ENCODE measurements at regions of chr13 and their contacts with region 1.

Region 1: GRCh38 chr13:95403828-95404522 is 102.7 kb upstream of the ABCC4 start:
- DNase-seq: peak; percentile 48
- ATAC-seq: peak; percentile 95
- H3K4me3 ChIP-seq: peak overlapping the region; percentile 65
- H3K27ac ChIP-seq: peak overlapping the region; percentile 36; the same call in 1 of the 2 replicates
- H3K4me1 ChIP-seq: peaks cover 7% of the 10 kb centered on the region; the same call in 1 of the 2 replicates
- H3K27me3 ChIP-seq: no peaks in the 10 kb centered on the region
- CTCF ChIP-seq: peak; percentile 91 to 97 (median 93); a peak in 5 of 6 replicates
- EP300 ChIP-seq: no peak
- POLR2A ChIP-seq: no peak
- RAD21 ChIP-seq: peak; percentile 100

Region 2: DNA sequence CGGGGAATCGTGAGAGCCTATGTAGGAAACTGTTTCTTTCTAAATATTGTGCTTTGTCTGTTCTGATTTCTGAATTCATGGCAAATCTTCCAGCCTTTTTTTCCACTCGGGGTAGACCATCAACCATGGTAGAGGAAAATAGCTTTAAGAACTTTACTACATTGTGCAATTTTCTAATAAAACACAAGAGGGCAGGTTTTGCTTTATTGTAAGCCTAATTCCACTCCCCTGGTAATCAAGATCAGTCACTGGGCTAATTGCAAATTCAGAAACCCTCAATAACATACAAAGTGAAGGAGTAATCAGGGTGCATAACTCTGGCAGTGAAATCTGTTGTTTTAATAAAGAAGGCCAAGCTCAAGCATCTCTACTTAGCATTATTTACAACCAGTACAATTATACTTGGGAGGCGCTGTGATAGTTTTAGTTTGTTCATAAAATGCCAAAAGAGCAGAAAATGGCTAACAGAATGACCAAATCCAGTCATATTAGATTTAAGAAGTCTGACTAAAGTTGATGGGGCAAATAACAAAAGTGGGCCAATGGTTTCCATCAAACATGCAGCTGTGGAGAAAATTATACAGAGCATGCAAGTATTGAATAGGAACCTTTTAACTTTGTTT is 968.3 kb before region 1 on chr13:
- CTCF ChIA-PET with region 1: interaction called, 4 read pairs
- POLR2A ChIA-PET with region 1: no interaction called
- RAD21 ChIA-PET with region 1: interaction called, 4 read pairs
- SMC1A ChIA-PET with region 1: no interaction called
- in situ Hi-C with region 1: loop called (anchors 25 kb)
- intact Hi-C with region 1: no loop called
- DNase-seq: no peak
- ATAC-seq: peak; percentile 83
- H3K4me3 ChIP-seq: no peak overlapping the region
- H3K27ac ChIP-seq: no peak overlapping the region
- H3K4me1 ChIP-seq: no peaks in the 10 kb centered on the region
- H3K27me3 ChIP-seq: no peaks in the 10 kb centered on the region; a peak in 1 of 4 replicates
- CTCF ChIP-seq: peak; percentile 44 to 62 (median 49); a peak in 4 of 6 replicates
- EP300 ChIP-seq: no peak
- POLR2A ChIP-seq: no peak
- RAD21 ChIP-seq: peak; percentile 79

Region 3: GRCh38 chr13:94859278-94859691 is 544.7 kb before region 1 on chr13:
- CTCF ChIA-PET with region 1: no interaction called
- POLR2A ChIA-PET with region 1: no interaction called
- RAD21 ChIA-PET with region 1: no interaction called
- SMC1A ChIA-PET with region 1: no interaction called
- in situ Hi-C with region 1: no loop called
- intact Hi-C with region 1: no loop called
- DNase-seq: no peak
- ATAC-seq: no peak
- H3K4me3 ChIP-seq: no peak overlapping the region
- H3K27ac ChIP-seq: no peak overlapping the region
- H3K4me1 ChIP-seq: no peaks in the 10 kb centered on the region
- H3K27me3 ChIP-seq: 0 out of 4 replicates have a peak, but pooled peaks cover 0 to 1% of the 10 kb centered on the region in 2 experiments
- CTCF ChIP-seq: no peak
- EP300 ChIP-seq: no peak
- POLR2A ChIP-seq: no peak
- RAD21 ChIP-seq: no peak

Region 4: GRCh38 chr13:94928127-94928775 is 475.7 kb before region 1 on chr13:
- CTCF ChIA-PET with region 1: no interaction called
- POLR2A ChIA-PET with region 1: no interaction called
- RAD21 ChIA-PET with region 1: no interaction called
- SMC1A ChIA-PET with region 1: no interaction called
- in situ Hi-C with region 1: no loop called
- intact Hi-C with region 1: no loop called
- DNase-seq: no peak
- ATAC-seq: no peak
- H3K4me3 ChIP-seq: no peak overlapping the region
- H3K27ac ChIP-seq: no peak overlapping the region
- H3K4me1 ChIP-seq: peaks cover 3% of the 10 kb centered on the region
- H3K27me3 ChIP-seq: no peaks in the 10 kb centered on the region
- CTCF ChIP-seq: no peak
- EP300 ChIP-seq: no peak
- POLR2A ChIP-seq: no peak
- RAD21 ChIP-seq: no peak

Region 5: DNA sequence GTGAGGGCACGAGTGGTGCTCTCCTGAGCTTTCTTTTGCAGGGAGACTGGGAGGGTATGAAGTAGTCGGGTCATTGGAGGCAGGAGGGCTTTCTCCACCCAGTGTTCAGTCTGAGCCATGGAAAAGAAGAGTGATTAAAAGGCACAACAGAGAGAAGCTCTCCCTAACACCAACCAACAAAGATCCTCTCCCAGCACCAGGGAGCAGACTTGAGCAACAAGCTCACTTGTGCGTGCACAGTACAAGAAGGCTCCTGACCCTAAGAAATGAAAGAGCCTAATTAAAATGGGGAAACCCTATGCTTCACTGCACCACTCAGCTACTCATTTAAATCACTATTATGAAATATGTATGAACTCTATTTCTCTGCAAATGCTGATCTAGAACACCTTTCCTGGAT is 415.3 kb before region 1 on chr13:
- CTCF ChIA-PET with region 1: interaction called, 16 read pairs
- POLR2A ChIA-PET with region 1: no interaction called
- RAD21 ChIA-PET with region 1: interaction called, 10 read pairs
- SMC1A ChIA-PET with region 1: interaction called, 9 read pairs
- in situ Hi-C with region 1: no loop called
- intact Hi-C with region 1: loop called (anchors 2 kb)
- DNase-seq: no peak
- ATAC-seq: peak; percentile 66
- H3K4me3 ChIP-seq: no peak overlapping the region
- H3K27ac ChIP-seq: no peak overlapping the region
- H3K4me1 ChIP-seq: no peaks in the 10 kb centered on the region
- H3K27me3 ChIP-seq: peaks cover 0 to 2% of the 10 kb centered on the region in 2 experiments; a peak in 2 of 4 replicates
- CTCF ChIP-seq: peak in 1 of 3 experiments; percentile 29; a peak in 1 of 6 replicates
- EP300 ChIP-seq: no peak
- POLR2A ChIP-seq: no peak
- RAD21 ChIP-seq: no peak

Region 6: GRCh38 chr13:95181586-95181985 is 222.4 kb before region 1 on chr13:
- CTCF ChIA-PET with region 1: interaction called, 512 read pairs
- POLR2A ChIA-PET with region 1: no interaction called
- RAD21 ChIA-PET with region 1: interaction called, 40 read pairs
- SMC1A ChIA-PET with region 1: interaction called, 51 read pairs
- in situ Hi-C with region 1: no loop called
- intact Hi-C with region 1: no loop called
- DNase-seq: peak; percentile 40
- ATAC-seq: peak; percentile 85
- H3K4me3 ChIP-seq: no peak overlapping the region
- H3K27ac ChIP-seq: peak overlapping the region; percentile 57
- H3K4me1 ChIP-seq: peaks cover 30% of the 10 kb centered on the region
- H3K27me3 ChIP-seq: no peaks in the 10 kb centered on the region
- CTCF ChIP-seq: no peak
- EP300 ChIP-seq: no peak
- POLR2A ChIP-seq: no peak
- RAD21 ChIP-seq: no peak

Region 7: GRCh38 chr13:95226932-95227695 is 176.9 kb before region 1 on chr13:
- CTCF ChIA-PET with region 1: interaction called, 4 read pairs
- POLR2A ChIA-PET with region 1: no interaction called
- RAD21 ChIA-PET with region 1: interaction called, 12 read pairs
- SMC1A ChIA-PET with region 1: interaction called, 9 read pairs
- in situ Hi-C with region 1: no loop called
- intact Hi-C with region 1: no loop called
- DNase-seq: peak; percentile 88
- ATAC-seq: peak; percentile 88
- H3K4me3 ChIP-seq: peak overlapping the region; percentile 49; the same call in 1 of the 2 replicates
- H3K27ac ChIP-seq: peak overlapping the region; percentile 98
- H3K4me1 ChIP-seq: peaks cover 37% of the 10 kb centered on the region
- H3K27me3 ChIP-seq: no peaks in the 10 kb centered on the region
- CTCF ChIP-seq: no peak
- EP300 ChIP-seq: peak; percentile 51 to 57
- POLR2A ChIP-seq: no peak
- RAD21 ChIP-seq: no peak

Region 8: DNA sequence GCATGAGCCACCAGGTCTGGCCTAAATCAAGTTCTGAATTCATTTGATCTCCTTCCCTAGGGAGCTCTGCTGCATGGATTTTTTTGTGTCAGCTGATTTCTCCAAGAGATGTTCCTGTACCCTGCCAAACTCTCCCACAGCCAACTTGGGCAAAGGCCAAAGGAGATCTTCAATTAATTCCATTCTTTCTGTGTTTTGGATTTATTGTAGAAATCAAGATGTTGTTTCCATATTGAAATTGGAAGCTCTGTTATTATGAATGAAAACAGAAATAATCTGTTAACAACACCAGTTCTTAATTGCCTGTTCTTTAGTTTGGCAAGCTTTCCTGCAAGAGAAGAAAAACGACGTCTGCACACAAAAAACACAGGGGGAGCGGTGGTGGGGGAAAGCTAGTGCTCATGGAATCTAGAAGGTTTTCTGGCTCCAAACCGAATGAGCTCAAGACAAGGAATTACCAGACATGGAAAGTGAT is 16.2 kb before region 1 on chr13:
- CTCF ChIA-PET with region 1: interaction called, 132 read pairs
- POLR2A ChIA-PET with region 1: interaction called, 3 read pairs
- RAD21 ChIA-PET with region 1: interaction called, 106 read pairs
- SMC1A ChIA-PET with region 1: interaction called, 122 read pairs
- in situ Hi-C with region 1: no loop called
- intact Hi-C with region 1: no loop called
- DNase-seq: no peak
- ATAC-seq: no peak
- H3K4me3 ChIP-seq: peak overlapping the region; percentile 29; the same call in 1 of the 2 replicates
- H3K27ac ChIP-seq: peak overlapping the region; percentile 56
- H3K4me1 ChIP-seq: peaks cover 28% of the 10 kb centered on the region
- H3K27me3 ChIP-seq: no peaks in the 10 kb centered on the region
- CTCF ChIP-seq: no peak
- EP300 ChIP-seq: no peak
- POLR2A ChIP-seq: no peak
- RAD21 ChIP-seq: no peak

Region 9: GRCh38 chr13:95480131-95480545 is 76.2 kb after region 1 on chr13:
- CTCF ChIA-PET with region 1: interaction called, 39 read pairs
- POLR2A ChIA-PET with region 1: no interaction called
- RAD21 ChIA-PET with region 1: interaction called, 32 read pairs
- SMC1A ChIA-PET with region 1: interaction called, 21 read pairs
- in situ Hi-C with region 1: no loop called
- intact Hi-C with region 1: loop called (anchors 1 kb)
- DNase-seq: peak; percentile 71
- ATAC-seq: peak; percentile 75
- H3K4me3 ChIP-seq: no peak overlapping the region
- H3K27ac ChIP-seq: peak overlapping the region; percentile 54
- H3K4me1 ChIP-seq: peaks cover 21% of the 10 kb centered on the region
- H3K27me3 ChIP-seq: no peaks in the 10 kb centered on the region
- CTCF ChIP-seq: no peak
- EP300 ChIP-seq: no peak
- POLR2A ChIP-seq: no peak
- RAD21 ChIP-seq: no peak

Measured in GM12878 (cell line).